Natural killer cell (primary cell): ENCODE measurements at regions of chr1 and their contacts with region 1.

Region 1: DNA sequence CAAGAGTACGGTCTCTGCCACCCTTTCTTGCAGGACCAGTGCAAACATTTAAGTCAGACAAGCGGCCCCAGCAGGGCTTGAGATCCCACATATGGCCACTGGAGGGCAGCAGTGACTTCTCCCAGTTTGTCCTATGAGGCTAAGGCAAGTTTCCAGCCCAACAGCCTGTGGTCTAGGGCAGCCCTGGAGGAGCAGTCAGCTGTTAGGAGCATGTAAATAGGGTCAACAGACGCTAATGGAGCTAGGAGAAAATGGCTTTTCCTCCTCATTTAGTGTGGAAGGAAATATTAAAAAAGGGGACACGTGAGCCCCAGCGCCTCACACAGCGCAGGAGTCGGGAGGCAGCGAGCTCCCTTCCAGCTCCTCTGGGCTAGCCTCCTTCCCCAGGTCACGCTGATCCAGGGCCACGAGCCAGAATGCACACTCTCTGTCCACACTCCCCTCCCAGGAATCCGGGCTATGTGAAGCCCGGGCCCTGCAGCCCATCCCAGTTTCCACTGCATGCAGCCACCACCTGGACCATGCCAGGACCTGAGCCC is 95.6 kb downstream of the LAMC2 start:
- DNase-seq: peak; percentile 40 to 74
- ATAC-seq: peak; percentile 54 to 79 (median 69)
- H3K4me3 ChIP-seq: no peak overlapping the region
- H3K4me3 Mint-ChIP-seq: no peak overlapping the region
- H3K27ac ChIP-seq: no peak overlapping the region
- H3K27ac Mint-ChIP-seq: no peak overlapping the region
- H3K4me1 ChIP-seq: no peaks in the 10 kb centered on the region
- H3K4me1 Mint-ChIP-seq: no peaks in the 10 kb centered on the region
- H3K27me3 ChIP-seq: no peaks in the 10 kb centered on the region
- H3K27me3 Mint-ChIP-seq: peaks cover 5 to 13% of the 10 kb centered on the region in 2 donors
- CTCF ChIP-seq: peak; percentile 69

Region 2: DNA sequence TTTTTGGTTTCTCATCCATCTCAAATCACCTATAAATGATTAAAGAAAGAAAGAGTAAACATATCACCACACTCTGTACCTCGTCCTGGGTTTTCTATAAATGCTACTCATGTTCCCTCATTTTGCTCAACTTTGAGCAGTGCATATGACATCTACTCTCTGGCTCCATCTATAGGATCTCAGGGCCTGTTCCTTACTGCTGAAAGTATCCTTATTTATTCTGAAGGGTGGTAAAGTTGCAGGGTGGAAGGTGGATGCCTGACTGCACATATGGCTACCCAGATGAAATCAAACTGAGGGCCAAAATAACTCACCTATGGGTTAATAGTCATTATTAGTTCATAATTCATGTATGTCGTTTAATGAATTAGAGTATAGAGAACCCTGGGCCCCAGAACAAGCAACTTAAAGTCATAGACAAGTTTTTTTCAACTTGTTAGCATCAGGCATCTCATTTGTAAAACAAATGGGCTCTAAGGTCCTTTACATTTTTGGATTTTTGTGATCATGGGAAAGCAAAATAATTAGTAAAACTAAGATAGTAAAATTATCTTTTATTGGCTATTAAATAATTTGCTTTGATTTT is 262.1 kb after region 1 on chr1:
- intact Hi-C with region 1: loop called (anchors 1 kb)
- DNase-seq: peak in 1 of 2 donors; percentile 71
- ATAC-seq: peak; percentile 78 to 92 (median 90)
- H3K4me3 ChIP-seq: no peak overlapping the region
- H3K4me3 Mint-ChIP-seq: no peak overlapping the region
- H3K27ac ChIP-seq: no peak overlapping the region
- H3K27ac Mint-ChIP-seq: peak overlapping the region; percentile 4 to 41
- H3K4me1 ChIP-seq: no peaks in the 10 kb centered on the region
- H3K4me1 Mint-ChIP-seq: peaks cover 5% of the 10 kb centered on the region in 2 donors
- H3K27me3 ChIP-seq: no peaks in the 10 kb centered on the region
- H3K27me3 Mint-ChIP-seq: no peaks in the 10 kb centered on the region
- CTCF ChIP-seq: peak; percentile 54

Region 3: DNA sequence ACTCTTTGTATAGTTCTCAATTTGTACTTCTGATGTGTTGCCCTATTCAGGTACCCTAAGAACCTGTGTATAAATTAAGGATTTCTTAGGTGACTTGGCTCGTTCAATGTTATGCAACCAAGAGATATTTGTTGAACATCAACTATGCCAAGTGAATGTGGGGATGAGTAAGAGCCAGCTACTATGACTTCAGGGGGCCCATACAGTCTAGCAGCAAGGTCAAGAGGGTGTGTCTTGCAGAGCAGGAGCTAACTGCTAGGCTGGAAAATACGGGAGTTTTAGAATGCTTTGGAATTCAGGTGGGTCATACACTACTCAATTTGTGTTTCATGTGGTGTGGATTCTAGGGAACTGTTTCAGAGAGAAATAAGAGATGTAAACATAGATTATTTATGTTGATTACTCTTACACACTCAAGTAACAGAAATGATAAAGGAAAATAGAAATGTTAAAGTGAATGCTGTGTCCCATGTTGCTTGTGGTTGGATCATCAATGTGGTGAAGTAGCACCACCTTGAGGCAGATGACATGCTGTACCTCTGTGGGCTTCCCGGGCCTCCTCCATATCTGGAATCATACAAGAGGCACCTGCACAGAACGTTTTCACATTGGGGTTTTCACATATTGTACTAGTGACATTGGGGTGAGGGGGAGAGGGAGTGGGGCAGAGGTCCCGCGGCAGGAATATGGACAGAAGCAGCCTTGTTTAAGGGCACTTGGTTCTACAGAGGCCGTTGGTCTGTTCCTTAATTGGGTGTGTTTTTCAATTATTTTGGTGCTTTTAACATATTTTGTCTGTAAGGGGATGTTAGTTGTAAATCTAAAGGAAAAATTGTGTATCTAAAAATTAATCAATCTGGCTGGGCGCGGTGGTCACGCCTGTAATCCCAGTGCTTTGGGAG is 341.5 kb after region 1 on chr1:
- intact Hi-C with region 1: loop called (anchors 2 kb)
- DNase-seq: peak in 1 of 2 donors; percentile 76
- ATAC-seq: peak; percentile 60 to 85 (median 83)
- H3K4me3 ChIP-seq: no peak overlapping the region
- H3K4me3 Mint-ChIP-seq: no peak overlapping the region
- H3K27ac ChIP-seq: no peak overlapping the region
- H3K27ac Mint-ChIP-seq: peak overlapping the region; percentile 63 to 82
- H3K4me1 ChIP-seq: no peaks in the 10 kb centered on the region
- H3K4me1 Mint-ChIP-seq: peaks cover 24 to 25% of the 10 kb centered on the region in 2 donors
- H3K27me3 ChIP-seq: no peaks in the 10 kb centered on the region
- H3K27me3 Mint-ChIP-seq: no peaks in the 10 kb centered on the region
- CTCF ChIP-seq: no peak

Region 4: GRCh38 chr1:183685112-183685713 is 403.6 kb after region 1 on chr1:
- intact Hi-C with region 1: loop called (anchors 1 kb)
- DNase-seq: peak in 1 of 2 donors; percentile 75
- ATAC-seq: peak; percentile 71 to 88 (median 79)
- H3K4me3 ChIP-seq: no peak overlapping the region
- H3K4me3 Mint-ChIP-seq: no peak overlapping the region
- H3K27ac ChIP-seq: no peak overlapping the region
- H3K27ac Mint-ChIP-seq: no peak overlapping the region
- H3K4me1 ChIP-seq: no peaks in the 10 kb centered on the region
- H3K4me1 Mint-ChIP-seq: no peaks in the 10 kb centered on the region
- H3K27me3 ChIP-seq: peaks cover 6% of the 10 kb centered on the region
- H3K27me3 Mint-ChIP-seq: peaks cover 27 to 34% of the 10 kb centered on the region in 2 donors
- CTCF ChIP-seq: peak; percentile 88

Region 5: GRCh38 chr1:183915625-183916510 is 634.2 kb after region 1 on chr1:
- intact Hi-C with region 1: loop called (anchors 5 kb)
- DNase-seq: peak; percentile 32 to 90
- ATAC-seq: peak; percentile 89 to 96 (median 94)
- H3K4me3 ChIP-seq: no peak overlapping the region
- H3K4me3 Mint-ChIP-seq: no peak overlapping the region
- H3K27ac ChIP-seq: no peak overlapping the region
- H3K27ac Mint-ChIP-seq: peak overlapping the region in 1 of 2 donors; percentile 62
- H3K4me1 ChIP-seq: peaks cover 7% of the 10 kb centered on the region
- H3K4me1 Mint-ChIP-seq: peaks cover 10 to 16% of the 10 kb centered on the region in 2 donors
- H3K27me3 ChIP-seq: no peaks in the 10 kb centered on the region
- H3K27me3 Mint-ChIP-seq: peaks cover 0 to 6% of the 10 kb centered on the region in 2 donors
- CTCF ChIP-seq: peak; percentile 86